HEK293T (cell line): ENCODE measurements at regions of chr6 and their contacts with region 1.

Region 1: DNA sequence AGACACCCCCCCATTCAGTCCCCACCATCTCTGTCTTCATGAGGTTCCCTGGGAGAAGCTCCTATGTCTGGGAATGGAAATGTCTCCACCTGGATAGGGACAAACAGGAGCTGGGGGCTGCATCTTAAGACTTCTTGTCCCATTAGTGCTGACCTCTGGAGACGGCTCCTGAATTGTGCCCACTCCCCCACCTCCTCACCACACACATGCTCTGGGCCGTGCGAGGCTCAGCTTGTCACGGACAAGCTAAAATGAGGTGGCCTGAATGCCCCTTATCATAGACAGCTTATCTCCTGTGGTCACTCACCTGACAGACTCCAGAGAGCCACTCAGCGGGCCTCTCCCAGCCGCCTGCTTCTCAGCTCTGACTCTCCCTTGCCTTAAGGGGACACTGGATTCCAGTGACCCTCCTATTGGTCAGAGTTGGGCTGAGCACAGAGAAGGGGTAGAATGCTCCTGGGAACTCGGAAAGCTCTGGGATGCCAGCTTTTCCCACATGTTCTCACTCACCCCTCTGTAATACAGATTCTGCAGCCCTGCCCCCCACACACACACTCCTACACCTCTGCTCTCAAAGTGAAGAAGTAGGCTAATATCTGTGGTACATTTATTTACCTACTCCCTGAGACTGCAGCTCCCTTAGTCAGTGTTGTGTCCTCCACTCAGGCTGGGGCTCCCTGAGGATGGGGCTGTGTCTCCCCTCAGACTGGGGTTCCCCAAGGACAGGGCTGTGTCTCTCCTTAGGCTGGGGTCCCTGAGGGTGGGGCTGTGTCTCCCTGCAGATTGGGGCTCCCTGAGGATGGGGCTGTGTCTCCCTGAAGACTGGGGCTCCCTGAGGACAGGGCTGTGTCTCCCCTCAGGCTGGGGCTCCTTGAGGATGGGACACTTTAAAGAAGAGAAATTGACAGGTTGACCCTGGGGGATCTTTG is 167.5 kb downstream of the VEGFA start:
- DNase-seq: no peak

Region 2: DNA sequence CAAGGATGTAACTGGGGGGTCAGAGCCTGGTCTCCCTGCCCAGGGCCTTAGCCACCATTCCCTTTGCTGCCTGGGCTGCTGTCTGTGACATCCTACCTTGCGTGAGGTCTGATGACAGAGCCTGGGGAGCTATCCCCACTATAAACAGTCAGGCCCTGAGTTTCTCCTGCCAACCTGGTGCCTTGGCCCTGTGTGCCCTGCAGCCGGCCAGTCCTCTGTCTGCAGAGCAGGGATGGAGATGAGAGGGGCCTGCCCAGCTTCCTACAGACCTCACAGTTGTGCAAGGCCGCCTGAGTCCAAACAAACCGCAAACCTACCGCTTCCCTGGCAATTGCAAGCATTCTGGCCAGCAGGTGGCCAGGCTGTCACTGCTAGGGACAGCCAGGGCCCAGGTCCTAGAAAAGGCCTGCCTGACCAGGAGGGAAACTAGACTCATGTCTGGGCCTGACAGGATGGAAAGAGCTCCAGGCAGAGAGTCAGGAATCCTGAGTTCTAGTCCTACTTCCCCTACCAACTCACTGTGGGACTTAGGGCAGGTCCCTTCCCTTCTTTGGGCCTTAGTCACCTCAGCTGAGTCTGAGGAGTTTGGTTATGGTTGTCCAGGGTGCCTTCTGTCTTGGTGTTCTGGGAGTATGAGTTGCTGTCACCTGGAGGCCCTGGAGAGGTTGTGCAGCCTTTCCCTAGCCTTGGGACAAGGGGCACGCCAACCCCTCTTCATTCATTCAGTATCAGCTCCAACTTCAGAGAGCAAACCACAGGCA is 81.3 kb before region 1 on chr6:
- CTCF ChIA-PET with region 1: no interaction called
- POLR2A ChIA-PET with region 1: no interaction called
- DNase-seq: peak; percentile 51

Region 3: DNA sequence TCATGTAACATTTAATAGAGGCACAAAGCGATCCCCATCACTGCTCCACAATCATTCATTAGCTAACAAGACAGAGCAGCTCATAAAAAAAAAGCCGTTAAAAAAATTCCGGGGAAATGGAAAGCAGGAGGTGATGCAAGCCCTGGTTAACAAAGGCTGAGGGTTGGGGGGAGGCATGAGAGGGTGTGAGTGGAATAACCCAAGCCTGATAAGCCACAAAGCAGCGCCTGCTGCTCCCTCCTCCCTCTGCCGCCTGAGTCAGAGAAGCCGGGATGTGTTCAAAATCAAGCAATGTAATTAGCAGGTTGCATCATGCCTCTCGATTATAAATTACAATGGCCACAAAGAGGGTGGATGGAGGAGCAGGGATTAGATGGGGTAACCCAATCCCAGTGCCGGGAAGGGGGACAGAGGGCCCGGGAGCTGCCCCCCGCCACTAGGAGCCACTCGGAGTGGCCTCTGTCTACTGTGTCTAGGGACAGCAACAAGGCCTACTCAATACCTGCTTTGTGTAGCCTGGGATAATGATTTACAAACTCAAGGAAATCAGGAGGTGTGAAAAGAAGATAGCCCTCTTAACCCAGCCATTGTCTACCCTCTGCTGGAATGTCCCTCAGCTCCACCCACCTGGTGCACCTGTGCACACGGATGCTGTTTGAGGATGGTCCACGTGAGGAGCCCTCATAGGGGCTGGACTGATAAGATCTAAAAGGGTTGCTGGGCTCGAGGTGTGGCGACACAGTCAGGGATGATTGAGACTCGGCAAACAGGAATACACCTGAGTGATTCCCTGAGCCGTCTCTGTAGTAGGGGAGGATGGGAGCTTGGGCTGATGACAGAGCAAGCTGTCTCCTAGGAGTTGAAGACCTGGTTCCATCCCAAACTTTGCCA is 10.6 kb before region 1 on chr6:
- CTCF ChIA-PET with region 1: interaction called, 5 read pairs
- POLR2A ChIA-PET with region 1: interaction called, 13 read pairs
- DNase-seq: peak; percentile 49

Region 4: DNA sequence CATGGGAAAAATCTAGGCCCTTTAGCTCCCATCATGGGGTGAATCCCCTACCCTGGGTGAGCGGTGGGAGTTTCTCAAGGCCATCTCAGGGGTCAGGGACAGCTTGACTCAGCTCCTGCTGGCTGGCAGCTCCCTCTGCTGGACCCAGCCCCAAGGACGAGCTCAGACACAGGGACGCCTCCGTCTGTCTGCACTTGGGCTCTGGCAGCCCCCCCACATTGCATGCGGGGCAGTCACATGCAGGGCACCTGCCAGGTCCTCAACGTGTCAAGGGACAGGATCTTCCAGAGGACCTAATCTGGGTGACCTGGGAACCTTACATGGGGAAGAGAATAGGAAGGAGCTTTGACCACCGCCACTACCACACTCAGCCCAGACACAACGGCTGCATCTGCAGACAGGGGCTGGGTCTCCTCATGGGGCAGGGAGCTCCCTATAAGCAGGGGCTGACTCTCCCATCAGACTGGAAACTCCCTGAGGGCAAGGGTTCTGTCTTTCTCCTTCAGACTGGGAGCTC is 16.4 kb after region 1 on chr6:
- CTCF ChIA-PET with region 1: interaction called, 12 read pairs
- POLR2A ChIA-PET with region 1: interaction called, 5 read pairs
- DNase-seq: no peak

Region 5: DNA sequence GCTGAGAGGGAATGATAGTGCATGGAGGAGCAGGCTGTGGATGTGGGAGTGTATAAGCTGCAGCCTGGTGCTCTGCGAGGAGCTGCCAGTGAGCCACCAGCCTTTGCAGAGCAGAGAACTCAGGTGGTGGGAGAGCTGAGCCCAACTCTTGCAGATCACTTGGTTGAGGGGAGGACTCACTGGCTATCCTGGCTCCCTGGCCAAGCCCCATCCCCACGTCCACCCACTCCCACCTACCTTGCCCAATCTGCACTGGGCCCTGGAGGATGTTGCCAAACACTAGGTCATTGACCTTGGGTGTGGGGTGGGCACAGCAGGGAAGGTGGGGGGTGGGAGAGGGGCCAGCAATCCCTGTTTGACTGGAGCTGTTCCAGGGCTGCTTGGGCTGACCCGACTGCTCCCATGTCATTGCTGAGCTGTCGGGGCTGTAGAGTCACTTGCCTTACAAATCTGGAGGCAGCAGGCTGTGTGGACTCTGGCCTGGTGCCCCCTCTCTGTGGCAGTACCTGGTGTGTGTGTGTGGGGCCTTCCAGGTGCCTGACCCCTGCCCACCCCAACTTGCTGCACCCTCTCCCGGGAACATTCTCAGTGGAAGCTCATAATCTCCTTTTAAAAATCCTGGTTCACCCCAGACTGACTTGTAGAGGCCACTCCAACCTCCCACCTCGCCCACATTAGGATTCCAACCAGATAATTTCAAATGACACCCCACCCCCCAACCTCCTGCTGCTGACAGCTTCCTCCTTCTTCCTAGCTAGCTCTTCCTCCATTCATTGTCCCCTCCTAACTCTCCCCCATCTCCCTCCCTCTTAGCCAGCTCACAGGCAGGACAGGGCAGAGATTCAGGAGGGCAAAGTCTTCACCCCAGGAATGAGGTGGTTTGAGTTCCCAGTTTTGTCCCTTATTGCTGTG is 27.4 kb after region 1 on chr6:
- CTCF ChIA-PET with region 1: no interaction called
- POLR2A ChIA-PET with region 1: no interaction called
- DNase-seq: no peak

Region 6: GRCh38 chr6:43977404-43978111 is 40.1 kb after region 1 on chr6:
- CTCF ChIA-PET with region 1: no interaction called
- POLR2A ChIA-PET with region 1: no interaction called
- DNase-seq: no peak

Region 7: DNA sequence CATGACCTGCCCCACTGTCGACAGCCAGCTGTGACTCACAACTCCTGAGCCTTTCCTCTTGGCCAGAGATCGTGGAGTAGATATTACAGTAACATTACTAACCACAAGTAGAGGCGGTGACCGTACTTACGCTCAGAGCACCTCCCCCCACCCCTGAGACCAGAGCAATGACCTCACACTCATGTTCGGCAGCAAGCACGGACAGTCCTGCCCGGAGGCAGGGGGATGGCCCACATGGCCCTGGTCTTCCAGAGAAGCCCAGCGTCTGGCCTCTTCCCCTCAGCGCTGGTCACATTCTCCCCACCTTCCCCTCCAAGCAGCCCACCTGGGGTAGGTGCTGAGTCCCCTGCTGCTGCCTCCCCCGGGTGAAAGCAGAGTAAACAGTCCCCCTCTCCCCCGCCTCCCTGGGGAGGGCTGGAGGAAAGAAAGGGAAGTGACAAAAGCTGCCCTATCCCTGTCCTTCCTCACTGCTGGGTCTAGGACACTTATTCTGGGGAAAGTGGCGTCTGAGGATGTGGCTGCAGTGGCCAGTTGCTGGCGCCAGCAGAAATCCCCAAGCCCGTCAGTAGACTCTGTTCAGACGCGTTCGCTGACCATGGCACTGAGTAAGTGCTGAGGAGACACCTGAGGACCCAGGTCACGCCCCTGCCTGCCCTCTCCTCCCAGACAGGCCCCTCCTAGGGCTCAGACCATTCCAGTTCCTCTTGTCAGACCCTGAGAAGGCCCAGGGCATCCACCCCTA is 121.3 kb after region 1 on chr6:
- CTCF ChIA-PET with region 1: no interaction called
- POLR2A ChIA-PET with region 1: no interaction called
- DNase-seq: no peak